PC-3 (cell line): ENCODE measurements at regions of chr3 and their contacts with region 1.

Region 1: DNA sequence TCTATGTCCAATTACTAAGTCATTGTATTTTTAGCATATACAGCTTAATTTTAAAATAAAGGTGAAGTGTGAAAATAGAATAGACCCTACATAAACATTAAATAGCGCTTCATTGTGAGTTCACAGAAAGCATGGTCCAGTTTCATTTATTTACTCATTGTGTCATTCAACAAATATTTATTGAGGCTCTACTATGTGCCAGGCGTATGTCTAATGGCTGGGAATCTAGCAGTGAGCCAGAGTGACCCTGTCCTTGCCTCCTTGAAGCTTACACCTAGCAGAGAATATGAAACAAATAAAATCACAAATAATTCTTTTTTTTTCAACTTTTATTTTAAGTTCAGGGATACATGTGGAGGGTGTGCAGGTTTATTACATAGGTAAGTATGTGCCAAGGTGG is 161.7 kb downstream of the CFAP20DC start:
- DNase-seq: peak; percentile 31
- ATAC-seq: peak; percentile 93
- H3K4me3 ChIP-seq: no peak overlapping the region
- H3K27ac ChIP-seq: no peak overlapping the region
- H3K4me1 ChIP-seq: peaks cover 10% of the 10 kb centered on the region
- H3K27me3 ChIP-seq: no peaks in the 10 kb centered on the region
- CTCF ChIP-seq: no peak

Region 2: DNA sequence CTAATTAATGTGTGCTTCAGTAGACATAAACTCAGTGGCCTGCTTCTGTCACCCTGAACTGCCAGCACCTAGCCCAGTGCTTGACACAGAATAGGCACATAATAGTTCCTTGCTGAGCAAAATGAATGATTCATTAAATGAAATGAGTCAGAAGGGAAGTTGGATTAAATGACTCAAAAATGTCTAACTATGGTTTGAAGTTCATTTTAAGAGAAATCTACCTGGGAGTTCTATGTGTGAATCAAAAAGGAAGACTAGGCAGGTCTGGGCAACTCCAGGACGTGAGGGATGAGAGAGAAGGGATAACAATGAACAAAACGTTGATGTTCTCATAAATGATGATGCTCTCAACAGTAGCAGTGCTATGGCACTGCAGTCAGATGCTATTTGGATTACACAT is 13.3 kb before region 1 on chr3:
- CTCF ChIA-PET with region 1: no interaction called
- POLR2A ChIA-PET with region 1: interaction called, 4 read pairs
- intact Hi-C with region 1: loop called (anchors 2 kb)
- DNase-seq: peak; percentile 88
- ATAC-seq: peak; percentile 85
- H3K4me3 ChIP-seq: peak overlapping the region; percentile 33; the same call in 1 of the 2 replicates
- H3K27ac ChIP-seq: peak overlapping the region; percentile 97
- H3K4me1 ChIP-seq: peaks cover 37% of the 10 kb centered on the region
- H3K27me3 ChIP-seq: no peaks in the 10 kb centered on the region
- CTCF ChIP-seq: no peak

Region 3: GRCh38 chr3:59006634-59007517 is 118.8 kb after region 1 on chr3:
- CTCF ChIA-PET with region 1: no interaction called
- POLR2A ChIA-PET with region 1: no interaction called
- intact Hi-C with region 1: no loop called
- DNase-seq: no peak
- ATAC-seq: no peak
- H3K4me3 ChIP-seq: no peak overlapping the region
- H3K27ac ChIP-seq: no peak overlapping the region
- H3K4me1 ChIP-seq: no peaks in the 10 kb centered on the region
- H3K27me3 ChIP-seq: no peaks in the 10 kb centered on the region
- CTCF ChIP-seq: no peak